ENCODE measurements at regions of chr10 and their contacts with region 1.

Region 1: DNA sequence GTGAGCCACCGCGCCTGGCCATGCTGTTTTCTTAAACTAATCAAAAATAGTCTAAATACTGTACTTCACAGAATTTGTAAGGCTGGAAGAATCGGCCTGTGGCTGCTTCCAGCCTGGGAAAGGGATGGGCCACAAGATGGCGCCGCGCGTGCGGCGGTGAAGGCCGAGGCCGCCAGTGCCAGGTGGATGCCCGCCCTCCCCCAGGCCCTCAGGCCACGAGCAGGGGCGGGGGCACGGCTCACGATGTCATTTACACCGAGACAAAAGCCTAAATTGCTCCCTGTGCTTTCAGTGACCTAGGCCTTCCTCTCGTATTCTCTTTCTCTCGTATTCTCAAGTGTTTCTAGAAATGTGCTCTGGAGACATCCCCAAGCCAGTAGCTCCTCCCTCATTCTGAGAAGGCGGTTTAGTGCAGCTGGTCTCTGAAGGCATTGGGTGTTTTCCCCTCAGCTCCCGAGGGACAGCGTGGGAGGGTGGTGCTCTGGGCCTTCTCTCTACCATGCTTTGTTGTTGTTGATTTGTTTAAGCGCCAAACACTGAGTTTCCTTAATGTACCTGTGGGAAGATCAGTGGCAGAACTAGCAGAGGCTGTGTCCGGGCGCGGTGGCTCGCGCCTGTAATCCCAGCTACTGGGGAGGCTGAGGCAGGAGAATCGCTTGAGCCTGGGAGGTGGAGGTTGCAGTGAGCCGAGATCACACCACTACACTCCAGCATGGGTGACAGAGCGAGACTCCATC is 68.4 kb downstream of the CDC123 start:
- DNase-seq: peak; percentile 75 to 84
- ATAC-seq: peak; percentile 64 to 96 (median 82)
- H3K4me3 ChIP-seq: peak overlapping the region; percentile 58
- H3K27ac ChIP-seq: no peak overlapping the region
- H3K4me1 ChIP-seq: no peaks in the 10 kb centered on the region
- H3K27me3 ChIP-seq: no peaks in the 10 kb centered on the region
- CTCF ChIP-seq: peak; percentile 64

Region 2: DNA sequence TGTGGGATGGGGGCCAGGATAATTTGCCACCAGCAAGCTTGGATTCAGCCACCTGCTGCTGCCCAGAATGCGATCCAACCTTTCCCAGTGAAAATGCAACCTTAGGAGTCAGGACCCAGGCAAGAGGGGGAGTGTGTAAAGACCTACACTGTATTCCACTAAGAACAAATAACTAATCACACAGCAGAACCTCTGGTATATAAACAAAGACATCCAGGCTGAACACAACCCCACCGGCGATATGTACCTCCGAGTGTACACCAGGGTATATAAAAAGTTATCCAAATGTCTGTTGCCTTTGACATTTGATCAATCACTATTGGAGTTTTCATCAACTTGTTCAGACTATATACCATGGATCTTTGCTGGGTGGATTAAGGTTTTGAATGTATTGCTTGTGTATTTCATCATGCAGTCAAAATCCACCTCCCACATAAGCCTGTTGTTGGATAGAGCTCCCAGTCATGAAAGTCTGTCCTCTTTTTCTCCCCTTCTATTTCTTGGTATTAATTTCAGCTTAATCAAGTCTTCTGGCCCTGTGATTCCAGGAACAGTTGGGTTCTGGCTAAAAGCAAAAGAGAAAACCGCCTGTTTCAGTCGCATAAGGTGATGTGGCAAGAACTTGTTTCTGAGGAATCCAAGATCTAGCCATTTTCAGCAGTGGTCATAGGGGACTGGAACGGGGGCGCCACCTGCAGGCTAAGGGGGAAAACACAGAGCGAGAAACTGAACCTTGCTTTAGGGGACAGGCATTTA is 446.4 kb after region 1 on chr10:
- intact Hi-C with region 1: loop called (anchors 2 to 5 kb)
- DNase-seq: peak; percentile 73 to 79
- ATAC-seq: peak in 3 of 4 donors; percentile 49 to 76 (median 71)
- H3K4me3 ChIP-seq: no peak overlapping the region
- H3K27ac ChIP-seq: no peak overlapping the region
- H3K4me1 ChIP-seq: no peaks in the 10 kb centered on the region
- H3K27me3 ChIP-seq: no peaks in the 10 kb centered on the region
- CTCF ChIP-seq: peak; percentile 73

Measured in psoas muscle (tissue), 8 donors.